Activated CD4-positive, alpha-beta memory T cell treated with anti-CD3 and anti-CD28 coated beads for 36 hours (primary cell): ENCODE measurements at regions of chr2 and their contacts with region 1.

Region 1: DNA sequence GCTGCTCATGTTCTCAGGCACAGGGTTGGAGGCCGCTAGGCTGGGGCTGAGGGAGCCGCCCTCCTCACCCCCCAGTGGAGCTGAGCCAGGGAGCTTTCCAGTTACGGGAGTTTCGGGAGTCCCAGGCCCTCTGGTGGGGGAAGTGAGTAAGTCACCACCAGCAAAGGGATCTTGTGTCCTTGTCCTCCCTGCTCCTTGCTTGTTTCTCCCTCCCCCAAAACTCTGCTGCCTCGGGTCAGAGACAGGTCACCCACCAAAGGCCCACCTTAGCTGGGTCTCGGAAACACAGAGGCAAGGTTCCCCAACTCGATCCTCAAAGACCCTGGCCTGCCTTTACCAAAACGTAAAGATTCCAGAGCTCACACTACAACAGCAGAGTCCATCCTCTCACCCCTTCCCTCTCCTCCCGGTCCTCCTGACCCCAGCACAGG is 60.5 kb upstream of the POMC start:
- DNase-seq: peak; percentile 37
- H3K4me3 Mint-ChIP-seq: no peak overlapping the region
- H3K27ac Mint-ChIP-seq: no peak overlapping the region
- H3K4me1 Mint-ChIP-seq: peaks cover 9% of the 10 kb centered on the region
- H3K27me3 Mint-ChIP-seq: no peaks in the 10 kb centered on the region

Region 2: DNA sequence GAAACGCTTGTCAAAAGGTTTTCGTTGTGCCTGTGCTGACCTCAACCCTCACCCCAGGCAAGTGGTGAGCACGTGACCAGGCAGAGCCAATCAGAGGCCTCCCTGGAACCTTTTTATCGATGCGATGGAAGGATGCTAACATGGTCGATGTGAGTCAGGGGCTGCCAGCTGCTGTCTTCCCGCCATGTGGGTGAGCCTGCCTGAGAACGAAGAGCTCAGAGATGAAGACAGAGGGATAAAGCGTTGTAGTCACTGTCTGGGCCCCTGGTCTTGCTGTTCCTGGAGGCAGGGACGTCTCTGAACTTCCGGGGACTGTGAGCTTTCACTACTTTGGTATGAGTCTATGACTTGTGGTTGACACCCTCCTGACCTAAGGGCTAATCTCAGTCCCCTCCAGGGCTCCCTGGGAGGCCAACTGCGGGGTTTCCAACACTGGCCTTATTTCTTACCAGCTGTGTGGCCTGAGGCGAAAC is 94.2 kb after region 1 on chr2:
- CTCF ChIA-PET with region 1: no interaction called
- POLR2A ChIA-PET with region 1: interaction called, 3 read pairs
- intact Hi-C with region 1: loop called (anchors 1 kb)
- DNase-seq: peak; percentile 89
- H3K4me3 Mint-ChIP-seq: peak overlapping the region; percentile 68
- H3K27ac Mint-ChIP-seq: peak overlapping the region; percentile 92
- H3K4me1 Mint-ChIP-seq: peaks cover 54% of the 10 kb centered on the region
- H3K27me3 Mint-ChIP-seq: no peaks in the 10 kb centered on the region